ENCODE measurements at regions of chr13 and their contacts with region 1.

Region 1: GRCh38 chr13:52011632-52012511 is at the start of gene ALG11:
- DNase-seq: peak; percentile 97
- ATAC-seq: peak; percentile 92
- H3K4me3 ChIP-seq: peak within 1 kb of the TSS; percentile 97 to 98 (median 98)
- H3K27ac ChIP-seq: peak within 1 kb of the TSS; percentile 97
- H3K4me1 ChIP-seq: peaks cover 61% of the 10 kb centered on the region
- H3K27me3 ChIP-seq: no peaks in the 10 kb centered on the region; a peak in 1 of 5 replicates
- CTCF ChIP-seq: peak; percentile 36; the same call in 1 of the 2 replicates
- EP300 ChIP-seq: peak; percentile 25 to 89; a peak in 2 of 4 replicates
- POLR2A ChIP-seq: peak; percentile 90 to 98
- RAD21 ChIP-seq: peak; percentile 72
- total RNA-seq, gene ALG11: 25.4 and 27.9 TPM in 2 replicates

Region 2: DNA sequence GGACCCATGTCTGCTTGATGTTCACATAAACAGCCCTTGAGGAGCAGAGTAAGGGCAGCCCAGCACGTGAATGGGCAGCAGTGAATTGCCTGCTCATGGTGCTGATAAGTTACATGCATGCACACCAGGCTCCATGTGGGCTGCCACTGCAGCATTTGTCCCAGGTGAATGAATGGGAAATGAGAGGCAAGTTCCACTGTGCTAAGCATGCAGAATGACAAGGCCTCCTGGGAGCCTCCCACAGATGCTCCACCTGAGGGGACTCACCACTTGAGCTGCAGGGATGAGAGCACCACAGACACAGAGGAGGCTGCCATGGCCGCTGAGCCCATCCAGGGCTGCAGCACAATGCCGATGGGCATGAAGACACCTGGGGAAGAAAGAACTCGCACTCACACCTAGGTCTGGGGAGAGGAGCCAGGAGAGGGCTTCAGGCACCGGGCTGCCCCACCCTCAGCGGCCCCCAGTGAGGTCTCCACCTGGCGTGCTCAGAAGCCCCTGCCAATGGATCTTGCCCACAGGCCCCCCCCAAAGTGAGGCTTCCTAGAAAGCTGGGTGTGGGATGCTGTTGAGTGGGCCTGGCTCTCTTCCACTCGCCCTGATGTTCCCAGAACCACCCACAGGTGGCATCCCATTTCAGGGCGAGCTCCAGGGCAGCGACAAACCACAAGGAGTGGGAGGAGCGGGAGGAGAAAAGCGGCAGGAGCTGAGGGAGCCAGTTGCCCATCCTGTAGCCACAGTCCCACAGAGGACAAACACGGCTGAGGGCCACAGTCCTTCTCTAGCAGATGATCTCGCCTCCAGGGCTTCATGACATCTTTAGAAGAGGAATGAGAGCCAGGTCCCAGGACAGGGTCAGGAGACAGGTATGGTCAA is 76.3 kb before region 1 on chr13:
- CTCF ChIA-PET with region 1: no interaction called
- POLR2A ChIA-PET with region 1: no interaction called
- in situ Hi-C with region 1: no loop called
- intact Hi-C with region 1: no loop called
- DNase-seq: no peak
- ATAC-seq: peak; percentile 76
- H3K4me3 ChIP-seq: no peak overlapping the region
- H3K27ac ChIP-seq: no peak overlapping the region
- H3K4me1 ChIP-seq: no peaks in the 10 kb centered on the region
- H3K27me3 ChIP-seq: no peaks in the 10 kb centered on the region
- CTCF ChIP-seq: peak; percentile 50; the same call in 1 of the 2 replicates
- EP300 ChIP-seq: no peak
- POLR2A ChIP-seq: no peak
- RAD21 ChIP-seq: no peak

Region 3: DNA sequence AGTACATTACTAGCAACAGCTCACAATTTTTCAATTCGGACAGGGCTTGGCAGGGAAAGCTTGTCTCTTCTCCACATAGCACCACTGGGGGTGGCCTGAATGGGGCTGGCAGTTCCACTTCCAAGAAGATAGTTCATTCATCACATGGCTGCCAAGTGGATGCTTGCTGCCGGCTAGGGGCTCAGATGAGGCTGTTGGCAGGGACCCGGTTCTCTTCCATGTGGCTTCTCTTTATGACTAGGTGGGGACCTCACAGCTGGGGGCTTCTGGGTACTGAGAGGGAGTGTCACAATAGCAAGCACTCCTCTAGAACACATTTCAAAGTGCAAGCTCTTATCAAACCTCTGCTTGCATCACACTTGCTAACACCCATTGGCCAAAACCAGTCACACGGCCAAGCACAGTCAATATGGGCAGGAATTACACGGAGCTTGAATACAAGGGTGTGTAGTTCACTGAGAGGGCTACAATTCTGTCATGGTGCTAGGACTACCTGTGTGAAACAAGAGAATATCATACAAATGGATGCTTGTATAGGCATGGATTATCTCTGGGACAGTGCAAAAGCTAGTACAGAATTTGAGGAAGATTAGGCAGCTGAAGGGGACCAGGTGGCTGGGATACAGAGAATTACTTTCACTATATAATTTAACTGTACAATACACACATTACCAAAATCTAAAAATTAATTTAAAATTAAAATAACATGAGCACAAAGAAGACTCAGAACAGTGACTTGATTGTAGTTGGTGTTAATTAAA is 32.9 kb before region 1 on chr13:
- CTCF ChIA-PET with region 1: no interaction called
- POLR2A ChIA-PET with region 1: interaction called, 14 read pairs
- in situ Hi-C with region 1: no loop called
- intact Hi-C with region 1: no loop called
- DNase-seq: peak; percentile 90
- ATAC-seq: peak; percentile 97
- H3K4me3 ChIP-seq: peak overlapping the region in 1 of 3 experiments; percentile 14; a peak in 1 of 6 replicates
- H3K27ac ChIP-seq: peak overlapping the region; percentile 55
- H3K4me1 ChIP-seq: peaks cover 75% of the 10 kb centered on the region
- H3K27me3 ChIP-seq: no peaks in the 10 kb centered on the region
- CTCF ChIP-seq: no peak
- EP300 ChIP-seq: peak in 1 of 2 experiments; percentile 42; a peak in 1 of 4 replicates
- POLR2A ChIP-seq: no peak
- RAD21 ChIP-seq: no peak

Region 4: DNA sequence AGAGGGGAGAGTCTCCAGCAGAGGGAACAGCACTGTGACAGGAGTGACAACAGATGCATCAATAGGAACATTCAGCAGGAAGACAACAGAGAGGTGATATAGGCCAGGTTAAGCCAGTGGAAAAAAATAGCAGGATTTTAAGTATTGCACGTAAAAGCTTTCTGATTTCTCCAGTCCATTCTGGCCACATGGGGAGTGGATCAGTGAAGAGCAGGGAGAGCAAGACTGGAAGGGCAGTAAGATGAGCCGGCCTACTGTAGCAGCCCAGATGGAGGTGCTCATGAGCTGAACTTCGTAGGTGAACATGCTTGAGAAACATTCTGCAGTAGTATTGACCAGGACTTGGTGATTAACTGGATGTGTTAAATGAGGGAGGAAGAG is 14.4 kb after region 1 on chr13:
- CTCF ChIA-PET with region 1: no interaction called
- POLR2A ChIA-PET with region 1: interaction called, 16 read pairs
- in situ Hi-C with region 1: no loop called
- intact Hi-C with region 1: loop called (anchors 1 kb)
- DNase-seq: peak; percentile 35
- ATAC-seq: peak; percentile 43
- H3K4me3 ChIP-seq: peak overlapping the region in 1 of 3 experiments; percentile 50; a peak in 2 of 6 replicates
- H3K27ac ChIP-seq: peak overlapping the region; percentile 84
- H3K4me1 ChIP-seq: peaks cover 40% of the 10 kb centered on the region
- H3K27me3 ChIP-seq: no peaks in the 10 kb centered on the region
- CTCF ChIP-seq: peak; percentile 57
- EP300 ChIP-seq: no peak
- POLR2A ChIP-seq: no peak
- RAD21 ChIP-seq: no peak

Region 5: DNA sequence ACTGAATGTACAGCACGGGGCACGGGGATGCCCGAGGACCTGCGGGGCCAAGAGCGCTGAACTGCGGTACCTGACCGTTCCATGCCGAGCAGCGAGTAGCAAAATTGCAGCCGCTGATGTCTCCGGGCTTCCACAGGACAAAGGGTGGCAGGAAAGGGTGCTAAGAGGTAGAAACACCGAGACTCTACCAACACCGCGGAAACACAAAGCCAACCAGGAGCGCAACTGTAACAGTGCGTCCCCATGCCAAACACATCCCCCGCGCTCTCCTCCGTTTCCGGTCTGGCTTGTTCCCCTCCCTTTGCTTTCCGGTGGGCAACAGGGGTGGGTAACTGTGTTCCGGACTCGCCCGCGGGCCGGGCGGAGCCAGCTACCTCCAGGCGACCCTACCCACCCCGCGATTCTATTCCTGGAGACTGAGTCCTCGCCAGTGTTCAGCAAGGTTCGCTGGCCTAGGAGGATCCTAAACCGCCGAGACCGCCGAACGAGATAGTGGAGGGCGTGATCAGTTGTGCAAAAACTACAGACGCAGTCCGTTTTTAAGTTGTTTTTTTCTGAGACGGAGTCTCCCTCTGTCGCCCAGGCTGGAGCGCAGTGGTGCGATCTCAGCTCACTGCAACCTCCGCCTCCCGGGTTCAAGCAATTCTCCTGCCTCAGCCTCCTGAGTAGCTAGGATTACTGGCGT is 182.5 kb after region 1 on chr13:
- CTCF ChIA-PET with region 1: no interaction called
- POLR2A ChIA-PET with region 1: no interaction called
- in situ Hi-C with region 1: no loop called
- intact Hi-C with region 1: loop called (anchors 5 kb)
- DNase-seq: peak; percentile 74
- ATAC-seq: peak; percentile 96
- H3K4me3 ChIP-seq: peak overlapping the region; percentile 86 to 94 (median 90)
- H3K27ac ChIP-seq: peak overlapping the region; percentile 79
- H3K4me1 ChIP-seq: peaks cover 40% of the 10 kb centered on the region
- H3K27me3 ChIP-seq: no peaks in the 10 kb centered on the region
- CTCF ChIP-seq: peak; percentile 31
- EP300 ChIP-seq: peak; percentile 35 to 40; a peak in 2 of 4 replicates
- POLR2A ChIP-seq: peak; percentile 85 to 95
- RAD21 ChIP-seq: peak; percentile 62